ENCODE measurements at regions of chr2 and their contacts with region 1.

Region 1: GRCh38 chr2:66587216-66587615 is 152.3 kb downstream of the MEIS1 start:
- DNase-seq: no peak
- H3K4me3 ChIP-seq: no peak overlapping the region
- H3K27ac ChIP-seq: peak overlapping the region in 2 of 4 donors; percentile 7 to 95
- H3K4me1 ChIP-seq: peaks cover 0 to 17% (median 10%) of the 10 kb centered on the region in 4 donors
- H3K27me3 ChIP-seq: no peaks in the 10 kb centered on the region
- CTCF ChIP-seq: no peak
- EP300 ChIP-seq: no peak
- POLR2A ChIP-seq: no peak

Region 2: DNA sequence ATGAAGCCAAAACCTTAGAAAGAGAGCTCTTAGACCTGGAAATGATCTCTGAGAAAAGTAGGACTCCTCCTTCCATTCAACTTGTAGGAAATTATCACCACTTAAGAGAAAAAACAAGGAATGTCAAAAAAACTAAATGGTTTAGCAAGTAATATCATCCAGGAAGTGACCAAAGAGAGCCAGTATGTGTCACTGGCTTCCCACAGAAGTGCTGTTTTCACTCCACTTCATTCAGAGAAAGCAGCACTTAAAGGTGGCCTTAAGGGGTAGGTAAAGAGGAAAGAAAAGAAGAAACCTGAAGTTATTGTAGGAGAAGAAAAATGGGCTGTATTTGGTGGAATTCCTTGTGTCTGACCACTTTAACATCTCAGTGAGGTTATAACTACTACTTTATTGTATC is 395.6 kb after region 1 on chr2:
- intact Hi-C with region 1: loop called (anchors 10 kb)
- DNase-seq: no peak
- H3K4me3 ChIP-seq: no peak overlapping the region
- H3K27ac ChIP-seq: peak overlapping the region in 2 of 4 donors; percentile 43 to 63
- H3K4me1 ChIP-seq: peaks cover 0 to 27% (median 15%) of the 10 kb centered on the region in 4 donors
- H3K27me3 ChIP-seq: no peaks in the 10 kb centered on the region
- CTCF ChIP-seq: no peak
- EP300 ChIP-seq: no peak
- POLR2A ChIP-seq: no peak

Region 3: GRCh38 chr2:67259581-67260342 is 672.5 kb after region 1 on chr2:
- intact Hi-C with region 1: loop called (anchors 2 kb)
- DNase-seq: peak; percentile 94
- H3K4me3 ChIP-seq: no peak overlapping the region
- H3K27ac ChIP-seq: peak overlapping the region; percentile 84 to 89 (median 86)
- H3K4me1 ChIP-seq: peaks cover 0 to 28% (median 19%) of the 10 kb centered on the region in 4 donors
- H3K27me3 ChIP-seq: no peaks in the 10 kb centered on the region
- CTCF ChIP-seq: no peak
- EP300 ChIP-seq: peak; percentile 51 to 86 (median 62)
- POLR2A ChIP-seq: no peak